ENCODE measurements at regions of chr14 and their contacts with region 1.

Region 1: GRCh38 chr14:77660754-77661153 is 44.3 kb upstream of the SPTLC2 start:
- DNase-seq: no peak
- ATAC-seq: no peak
- H3K4me3 ChIP-seq: no peak overlapping the region
- H3K27ac ChIP-seq: no peak overlapping the region
- H3K4me1 ChIP-seq: no peaks in the 10 kb centered on the region
- H3K27me3 ChIP-seq: no peaks in the 10 kb centered on the region
- CTCF ChIP-seq: no peak
- POLR2A ChIP-seq: no peak
- RAD21 ChIP-seq: no peak

Region 2: GRCh38 chr14:77485901-77486678 is 174.7 kb before region 1 on chr14:
- CTCF ChIA-PET with region 1: no interaction called
- POLR2A ChIA-PET with region 1: no interaction called
- RAD21 ChIA-PET with region 1: no interaction called
- intact Hi-C with region 1: no loop called
- DNase-seq: no peak
- ATAC-seq: peak; percentile 42; the same call in 1 of the 2 replicates
- H3K4me3 ChIP-seq: no peak overlapping the region
- H3K27ac ChIP-seq: no peak overlapping the region
- H3K4me1 ChIP-seq: no peaks in the 10 kb centered on the region
- H3K27me3 ChIP-seq: no peaks in the 10 kb centered on the region
- CTCF ChIP-seq: no peak
- POLR2A ChIP-seq: no peak
- RAD21 ChIP-seq: no peak

Region 3: GRCh38 chr14:77799863-77800730 is 139.3 kb after region 1 on chr14 and contains the start of gene ADCK1:
- CTCF ChIA-PET with region 1: no interaction called
- POLR2A ChIA-PET with region 1: no interaction called
- RAD21 ChIA-PET with region 1: no interaction called
- intact Hi-C with region 1: loop called (anchors 5 kb)
- DNase-seq: peak; percentile 60
- ATAC-seq: peak; percentile 87
- H3K4me3 ChIP-seq: peak within 1 kb of the TSS; percentile 70 to 71
- H3K27ac ChIP-seq: peak within 1 kb of the TSS; percentile 79
- H3K4me1 ChIP-seq: peaks cover 9 to 31% of the 10 kb centered on the region in 2 experiments
- H3K27me3 ChIP-seq: no peaks in the 10 kb centered on the region
- CTCF ChIP-seq: peak in 2 of 3 experiments; percentile 24 to 36; a peak in 3 of 6 replicates
- POLR2A ChIP-seq: peak; percentile 66
- RAD21 ChIP-seq: no peak
- total RNA-seq, gene ADCK1: 6.0 TPM

Region 4: GRCh38 chr14:77812028-77812427 is 151.3 kb after region 1 on chr14:
- CTCF ChIA-PET with region 1: no interaction called
- POLR2A ChIA-PET with region 1: no interaction called
- RAD21 ChIA-PET with region 1: no interaction called
- intact Hi-C with region 1: loop called (anchors 1 kb)
- DNase-seq: no peak
- ATAC-seq: no peak
- H3K4me3 ChIP-seq: no peak overlapping the region
- H3K27ac ChIP-seq: no peak overlapping the region
- H3K4me1 ChIP-seq: peaks cover 4 to 5% of the 10 kb centered on the region in 2 experiments; a peak in 3 of 4 replicates
- H3K27me3 ChIP-seq: no peaks in the 10 kb centered on the region
- CTCF ChIP-seq: no peak
- POLR2A ChIP-seq: no peak
- RAD21 ChIP-seq: no peak

Region 5: GRCh38 chr14:78598041-78598920 is 937.5 kb after region 1 on chr14:
- CTCF ChIA-PET with region 1: no interaction called
- POLR2A ChIA-PET with region 1: no interaction called
- RAD21 ChIA-PET with region 1: no interaction called
- intact Hi-C with region 1: loop called (anchors 5 kb)
- DNase-seq: peak; percentile 29
- ATAC-seq: peak; percentile 94
- H3K4me3 ChIP-seq: no peak overlapping the region
- H3K27ac ChIP-seq: no peak overlapping the region
- H3K4me1 ChIP-seq: no peaks in the 10 kb centered on the region
- H3K27me3 ChIP-seq: no peaks in the 10 kb centered on the region; the same call in 1 of the 2 replicates
- CTCF ChIP-seq: peak; percentile 46 to 91 (median 90); a peak in 5 of 6 replicates
- POLR2A ChIP-seq: no peak
- RAD21 ChIP-seq: peak; percentile 68